Natural killer cell (primary cell): ENCODE measurements at regions of chr1 and their contacts with region 1.

Region 1: GRCh38 chr1:166875734-166876539 is at the start of gene TADA1:
- DNase-seq: peak; percentile 93 to 99
- ATAC-seq: peak; percentile 89 to 94 (median 91)
- H3K4me3 ChIP-seq: peak within 1 kb of the TSS; percentile 60
- H3K4me3 Mint-ChIP-seq: peak within 1 kb of the TSS; percentile 99
- H3K27ac ChIP-seq: peak within 1 kb of the TSS; percentile 73
- H3K27ac Mint-ChIP-seq: peak within 1 kb of the TSS; percentile 91 to 93
- H3K4me1 ChIP-seq: peaks cover 13% of the 10 kb centered on the region
- H3K4me1 Mint-ChIP-seq: peaks cover 23 to 35% of the 10 kb centered on the region in 2 donors
- H3K27me3 ChIP-seq: no peaks in the 10 kb centered on the region
- H3K27me3 Mint-ChIP-seq: peaks cover 0 to 6% of the 10 kb centered on the region in 2 donors
- CTCF ChIP-seq: no peak
- total RNA-seq, gene TADA1: 11.7 to 13.7 (median 12.5) TPM

Region 2: GRCh38 chr1:166865931-166866330 is 10.0 kb before region 1 on chr1:
- intact Hi-C with region 1: no loop called
- DNase-seq: no peak
- ATAC-seq: no peak
- H3K4me3 ChIP-seq: no peak overlapping the region
- H3K4me3 Mint-ChIP-seq: no peak overlapping the region
- H3K27ac ChIP-seq: no peak overlapping the region
- H3K27ac Mint-ChIP-seq: no peak overlapping the region
- H3K4me1 ChIP-seq: no peaks in the 10 kb centered on the region
- H3K4me1 Mint-ChIP-seq: peaks cover 13 to 15% of the 10 kb centered on the region in 2 donors
- H3K27me3 ChIP-seq: no peaks in the 10 kb centered on the region
- H3K27me3 Mint-ChIP-seq: no peaks in the 10 kb centered on the region
- CTCF ChIP-seq: no peak

Region 3: DNA sequence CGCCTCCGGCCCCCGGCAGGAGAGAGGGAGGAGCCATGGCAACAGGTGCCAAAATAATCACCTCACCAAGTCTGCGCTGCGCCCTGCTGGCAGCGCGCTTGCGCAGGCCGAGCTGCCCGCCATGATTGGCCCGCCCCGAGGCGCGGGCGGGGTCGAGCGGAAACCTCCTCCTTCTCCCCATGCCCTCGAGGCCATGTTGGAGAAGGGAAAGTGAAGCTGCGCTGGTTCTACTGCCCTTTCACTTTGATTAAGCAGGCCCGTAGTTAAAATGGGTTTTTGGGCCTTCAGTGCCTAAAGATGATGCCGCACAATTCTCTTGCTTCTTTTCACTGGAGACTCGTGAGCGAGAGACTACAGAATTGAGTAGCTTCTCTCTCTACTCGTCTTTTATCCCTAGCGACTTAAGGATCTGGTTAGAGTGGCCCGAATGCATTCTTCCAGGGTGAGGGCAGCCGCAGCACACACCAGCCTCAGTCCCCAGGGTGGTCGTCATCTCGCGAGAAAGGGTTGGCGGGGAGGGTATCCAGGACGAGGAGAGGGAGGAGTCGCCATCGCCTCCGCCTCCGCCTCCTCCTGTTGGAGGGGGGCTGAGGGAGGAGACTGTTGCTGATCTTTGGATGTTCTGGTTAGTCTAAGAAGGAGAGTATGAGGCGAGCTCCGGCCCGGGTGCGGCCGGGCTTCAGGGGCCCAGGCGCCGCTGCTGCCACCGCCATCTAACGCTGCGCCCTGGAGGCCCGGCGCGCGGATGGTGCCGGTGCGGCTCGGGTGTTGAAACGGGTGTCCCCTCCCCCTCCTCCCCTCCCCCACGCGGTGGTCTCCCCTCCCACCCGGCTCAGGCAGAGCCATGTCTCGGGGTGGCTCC is 1060.4 kb after region 1 on chr1 and contains the start of gene DCAF6:
- intact Hi-C with region 1: loop called (anchors 5 kb)
- DNase-seq: peak; percentile 95 to 99
- ATAC-seq: peak; percentile 81 to 93 (median 84)
- H3K4me3 ChIP-seq: peak within 1 kb of the TSS; percentile 90
- H3K4me3 Mint-ChIP-seq: peak within 1 kb of the TSS; percentile 93
- H3K27ac ChIP-seq: peak within 1 kb of the TSS; percentile 95
- H3K27ac Mint-ChIP-seq: peak within 1 kb of the TSS; percentile 93 to 98
- H3K4me1 ChIP-seq: peaks cover 8% of the 10 kb centered on the region
- H3K4me1 Mint-ChIP-seq: peaks cover 34 to 41% of the 10 kb centered on the region in 2 donors
- H3K27me3 ChIP-seq: no peaks in the 10 kb centered on the region
- H3K27me3 Mint-ChIP-seq: no peaks in the 10 kb centered on the region
- CTCF ChIP-seq: no peak
- total RNA-seq, gene DCAF6: 21.8 to 31.8 (median 27.8) TPM